GM12878 (cell line): ENCODE measurements at regions of chr3 and their contacts with region 1.

Region 1: GRCh38 chr3:186540221-186540834 is 3.9 kb downstream of the CRYGS start:
- DNase-seq: peak; percentile 76
- ATAC-seq: peak; percentile 84
- H3K4me3 ChIP-seq: no peak overlapping the region
- H3K27ac ChIP-seq: peak overlapping the region; percentile 30
- H3K4me1 ChIP-seq: peaks cover 50% of the 10 kb centered on the region
- H3K27me3 ChIP-seq: no peaks in the 10 kb centered on the region
- CTCF ChIP-seq: peak; percentile 48 to 91 (median 72); a peak in 5 of 6 replicates
- EP300 ChIP-seq: no peak
- POLR2A ChIP-seq: no peak
- RAD21 ChIP-seq: peak; percentile 99

Region 2: DNA sequence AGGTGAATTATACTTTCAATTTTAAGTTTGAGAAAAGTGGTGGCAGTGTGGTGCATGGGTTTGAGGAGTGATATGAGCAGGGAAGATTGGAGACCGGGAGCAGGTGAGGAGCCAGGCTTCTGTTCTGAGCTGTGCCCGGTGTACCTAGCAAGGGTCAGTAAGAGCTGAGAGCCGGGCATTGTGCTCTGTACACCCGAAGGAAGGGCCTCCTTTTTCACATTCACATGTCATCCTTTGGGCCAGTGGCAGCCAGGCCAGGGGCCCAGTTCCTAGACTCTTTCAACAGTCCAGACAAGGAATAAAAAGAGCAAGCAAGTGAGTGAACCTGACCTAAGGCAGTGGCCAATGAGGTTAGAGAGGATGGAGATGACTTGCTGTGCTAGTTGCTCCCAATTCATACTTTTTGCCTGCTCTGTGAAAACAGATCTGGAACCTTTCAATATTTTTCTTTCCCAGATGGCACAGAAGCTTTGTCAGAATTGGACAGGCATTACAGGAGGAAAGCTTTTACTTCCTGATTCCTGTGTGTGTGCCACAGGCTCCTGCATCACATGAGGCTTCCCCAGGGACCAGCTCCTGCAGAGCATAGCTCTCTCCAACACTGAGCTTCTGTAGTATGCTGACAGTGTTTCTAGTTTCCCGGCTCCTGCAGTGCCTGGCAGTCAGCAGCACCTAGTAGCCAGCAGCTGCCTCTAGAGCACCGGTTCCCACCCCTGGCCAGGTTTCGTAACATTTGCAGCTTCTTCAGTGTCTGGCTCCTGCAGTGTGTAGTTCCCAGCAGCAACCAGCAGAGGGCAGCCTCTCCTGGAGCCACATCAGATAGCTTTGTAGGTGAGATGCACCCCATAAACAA is 597.2 kb before region 1 on chr3:
- CTCF ChIA-PET with region 1: interaction called, 51 read pairs
- POLR2A ChIA-PET with region 1: no interaction called
- RAD21 ChIA-PET with region 1: interaction called, 29 read pairs
- SMC1A ChIA-PET with region 1: interaction called, 25 read pairs
- in situ Hi-C with region 1: no loop called
- intact Hi-C with region 1: no loop called
- DNase-seq: peak; percentile 51
- ATAC-seq: peak; percentile 98
- H3K4me3 ChIP-seq: no peak overlapping the region
- H3K27ac ChIP-seq: no peak overlapping the region
- H3K4me1 ChIP-seq: peaks cover 5% of the 10 kb centered on the region; the same call in 1 of the 2 replicates
- H3K27me3 ChIP-seq: 0 out of 4 replicates have a peak, but pooled peaks cover 0 to 3% of the 10 kb centered on the region in 2 experiments
- CTCF ChIP-seq: peak; percentile 94 to 99 (median 99)
- EP300 ChIP-seq: no peak
- POLR2A ChIP-seq: no peak
- RAD21 ChIP-seq: peak; percentile 67

Region 3: GRCh38 chr3:186217820-186218164 is 322.5 kb before region 1 on chr3:
- CTCF ChIA-PET with region 1: interaction called, 7 read pairs
- POLR2A ChIA-PET with region 1: no interaction called
- RAD21 ChIA-PET with region 1: interaction called, 3 read pairs
- SMC1A ChIA-PET with region 1: interaction called, 12 read pairs
- in situ Hi-C with region 1: no loop called
- intact Hi-C with region 1: no loop called
- DNase-seq: peak; percentile 63
- ATAC-seq: peak; percentile 97
- H3K4me3 ChIP-seq: no peak overlapping the region
- H3K27ac ChIP-seq: peak overlapping the region; percentile 57
- H3K4me1 ChIP-seq: peaks cover 26% of the 10 kb centered on the region
- H3K27me3 ChIP-seq: no peaks in the 10 kb centered on the region; a peak in 1 of 4 replicates
- CTCF ChIP-seq: no peak
- EP300 ChIP-seq: peak; percentile 52 to 67; a peak in 3 of 4 replicates
- POLR2A ChIP-seq: no peak
- RAD21 ChIP-seq: no peak

Region 4: DNA sequence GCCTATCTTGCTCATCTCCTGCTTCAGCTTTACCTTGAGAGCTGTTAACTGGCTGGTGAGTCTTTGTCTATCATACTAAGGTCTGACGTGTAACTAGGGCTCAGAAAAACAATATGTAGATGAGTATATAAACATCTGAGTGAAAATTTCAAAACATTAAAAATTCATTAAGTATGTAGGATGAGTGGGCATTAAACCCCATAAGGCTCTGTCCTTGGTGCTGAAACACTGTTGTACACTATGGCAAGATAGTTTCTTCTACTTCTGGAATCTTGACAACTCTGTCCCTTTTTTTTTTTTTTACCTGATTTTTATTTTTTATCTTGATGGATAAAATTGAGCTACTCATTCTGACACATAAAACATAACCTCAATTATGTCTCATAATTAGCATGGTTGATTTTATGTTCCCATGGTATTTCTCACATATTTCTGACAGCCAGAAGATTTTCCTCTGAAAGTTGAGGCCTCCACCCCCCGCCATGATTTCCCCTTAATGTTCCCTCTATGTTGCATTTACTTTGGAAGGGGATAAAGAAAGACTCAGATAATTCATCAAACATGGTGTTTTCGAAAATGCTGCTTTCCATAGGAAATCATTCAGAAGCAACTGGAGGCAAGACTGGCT is 232.6 kb before region 1 on chr3:
- CTCF ChIA-PET with region 1: interaction called, 15 read pairs
- POLR2A ChIA-PET with region 1: no interaction called
- RAD21 ChIA-PET with region 1: interaction called, 3 read pairs
- SMC1A ChIA-PET with region 1: interaction called, 18 read pairs
- in situ Hi-C with region 1: no loop called
- intact Hi-C with region 1: no loop called
- DNase-seq: no peak
- ATAC-seq: no peak
- H3K4me3 ChIP-seq: no peak overlapping the region
- H3K27ac ChIP-seq: no peak overlapping the region
- H3K4me1 ChIP-seq: no peaks in the 10 kb centered on the region
- H3K27me3 ChIP-seq: peaks cover 2 to 7% of the 10 kb centered on the region in 2 experiments; a peak in 2 of 4 replicates
- CTCF ChIP-seq: no peak
- EP300 ChIP-seq: no peak
- POLR2A ChIP-seq: no peak
- RAD21 ChIP-seq: no peak

Region 5: DNA sequence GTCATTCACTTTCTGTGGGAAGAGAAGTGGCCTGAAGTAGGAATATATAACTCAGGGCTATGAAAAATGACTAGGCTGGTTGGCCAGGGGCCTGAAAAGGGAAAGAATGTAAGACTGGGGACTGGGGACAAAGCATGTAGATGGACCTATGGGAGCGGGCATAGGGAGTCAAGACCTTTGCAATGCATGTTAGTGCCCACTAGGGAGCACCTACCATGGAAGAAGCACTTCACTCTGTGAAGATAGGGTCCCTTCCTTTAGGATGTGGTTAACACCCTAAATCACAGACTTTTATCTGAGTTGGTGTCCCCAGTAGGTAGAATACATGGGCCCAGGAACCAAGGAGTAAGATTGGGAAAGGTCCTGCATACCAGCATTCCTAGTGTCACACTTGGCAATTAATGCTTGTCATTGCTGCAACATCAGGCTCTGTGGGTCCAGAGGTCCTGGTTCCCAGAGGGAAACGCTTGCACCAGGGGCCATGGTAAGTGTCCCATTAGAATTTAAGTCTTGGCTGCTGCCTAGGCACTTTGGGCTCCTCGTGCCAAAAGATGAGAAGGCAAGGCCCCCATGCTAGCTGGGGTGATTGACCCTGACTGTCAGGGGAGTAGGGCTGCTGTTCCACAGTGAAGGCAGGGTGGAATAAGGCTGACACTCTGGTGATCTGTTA is 75.8 kb before region 1 on chr3:
- CTCF ChIA-PET with region 1: interaction called, 32 read pairs
- POLR2A ChIA-PET with region 1: no interaction called
- RAD21 ChIA-PET with region 1: interaction called, 25 read pairs
- SMC1A ChIA-PET with region 1: interaction called, 28 read pairs
- in situ Hi-C with region 1: no loop called
- intact Hi-C with region 1: loop called (anchors 5 kb)
- DNase-seq: no peak
- ATAC-seq: peak; percentile 67
- H3K4me3 ChIP-seq: no peak overlapping the region
- H3K27ac ChIP-seq: no peak overlapping the region
- H3K4me1 ChIP-seq: no peaks in the 10 kb centered on the region
- H3K27me3 ChIP-seq: no peaks in the 10 kb centered on the region
- CTCF ChIP-seq: peak; percentile 4 to 49 (median 36); a peak in 3 of 6 replicates
- EP300 ChIP-seq: no peak
- POLR2A ChIP-seq: no peak
- RAD21 ChIP-seq: peak; percentile 18; the same call in 1 of the 2 replicates

Region 6: GRCh38 chr3:186514296-186515002 is 25.9 kb before region 1 on chr3:
- CTCF ChIA-PET with region 1: interaction called, 282 read pairs
- POLR2A ChIA-PET with region 1: interaction called, 25 read pairs
- RAD21 ChIA-PET with region 1: interaction called, 224 read pairs
- SMC1A ChIA-PET with region 1: interaction called, 429 read pairs
- in situ Hi-C with region 1: no loop called
- intact Hi-C with region 1: loop called (anchors 2 kb)
- DNase-seq: no peak
- ATAC-seq: no peak
- H3K4me3 ChIP-seq: no peak overlapping the region
- H3K27ac ChIP-seq: no peak overlapping the region
- H3K4me1 ChIP-seq: peaks cover 59% of the 10 kb centered on the region
- H3K27me3 ChIP-seq: no peaks in the 10 kb centered on the region
- CTCF ChIP-seq: peak; percentile 15 to 54 (median 49); a peak in 4 of 6 replicates
- EP300 ChIP-seq: no peak
- POLR2A ChIP-seq: no peak
- RAD21 ChIP-seq: peak; percentile 36; the same call in 1 of the 2 replicates

Region 7: GRCh38 chr3:186570096-186570940 is 30.0 kb after region 1 on chr3 and contains the start of gene DNAJB11:
- CTCF ChIA-PET with region 1: interaction called, 17 read pairs
- POLR2A ChIA-PET with region 1: interaction called, 20 read pairs
- RAD21 ChIA-PET with region 1: interaction called, 28 read pairs
- SMC1A ChIA-PET with region 1: interaction called, 36 read pairs
- in situ Hi-C with region 1: no loop called
- intact Hi-C with region 1: no loop called
- DNase-seq: peak; percentile 98
- ATAC-seq: peak; percentile 90
- H3K4me3 ChIP-seq: peak within 1 kb of the TSS; percentile 90
- H3K27ac ChIP-seq: peak within 1 kb of the TSS; percentile 85
- H3K4me1 ChIP-seq: peaks cover 10% of the 10 kb centered on the region
- H3K27me3 ChIP-seq: no peaks in the 10 kb centered on the region
- CTCF ChIP-seq: no peak
- EP300 ChIP-seq: no peak
- POLR2A ChIP-seq: peak; percentile 92
- RAD21 ChIP-seq: no peak
- polyA plus RNA-seq, gene DNAJB11: 16.2 to 26.4 TPM

Region 8: GRCh38 chr3:187125319-187126031 is 585.1 kb after region 1 on chr3:
- CTCF ChIA-PET with region 1: no interaction called
- POLR2A ChIA-PET with region 1: no interaction called
- RAD21 ChIA-PET with region 1: no interaction called
- SMC1A ChIA-PET with region 1: no interaction called
- in situ Hi-C with region 1: no loop called
- intact Hi-C with region 1: no loop called
- DNase-seq: peak; percentile 46
- ATAC-seq: peak; percentile 82
- H3K4me3 ChIP-seq: no peak overlapping the region
- H3K27ac ChIP-seq: no peak overlapping the region
- H3K4me1 ChIP-seq: peaks cover 9% of the 10 kb centered on the region
- H3K27me3 ChIP-seq: no peaks in the 10 kb centered on the region
- CTCF ChIP-seq: no peak
- EP300 ChIP-seq: no peak
- POLR2A ChIP-seq: no peak
- RAD21 ChIP-seq: no peak